ENCODE measurements at regions of chr2 and their contacts with region 1.

Region 1: DNA sequence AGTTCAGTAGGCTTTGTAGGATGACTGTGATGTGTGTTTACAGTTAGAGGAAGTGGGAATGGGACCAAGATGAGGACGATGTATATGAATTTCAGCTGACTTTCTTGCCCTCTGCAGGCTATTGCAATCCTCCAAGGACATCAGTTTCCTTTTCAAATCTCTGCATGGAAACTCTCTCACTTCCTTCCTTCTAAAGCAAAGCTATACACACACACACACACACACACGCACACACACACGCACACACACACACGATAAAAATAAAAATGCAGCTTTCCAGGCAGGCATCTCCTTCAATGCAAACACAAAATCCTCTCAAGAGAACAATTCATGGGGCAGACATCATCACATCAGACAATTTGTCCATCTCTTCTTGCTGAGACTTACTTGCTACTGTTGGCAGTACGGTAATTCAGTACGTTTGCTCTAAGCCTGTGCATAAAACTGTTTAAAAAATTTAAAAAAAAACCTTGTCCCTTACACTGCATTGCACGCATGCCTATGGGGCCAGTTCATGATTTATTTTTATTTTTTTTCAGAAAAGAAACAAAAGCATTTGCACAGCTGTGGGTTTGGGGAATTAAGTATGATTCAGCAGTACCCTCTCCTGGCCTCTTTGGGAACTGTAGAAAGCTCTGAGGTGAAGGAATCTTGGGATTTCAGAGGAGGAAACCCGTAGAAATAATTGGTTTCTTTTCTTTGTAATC is 27.1 kb upstream of the ICOS start:
- DNase-seq: no peak
- ATAC-seq: peak; percentile 89
- H3K4me3 ChIP-seq: no peak overlapping the region
- H3K27ac ChIP-seq: no peak overlapping the region
- H3K4me1 ChIP-seq: no peaks in the 10 kb centered on the region
- H3K27me3 ChIP-seq: 0 out of 2 replicates have a peak, but pooled peaks cover 3% of the 10 kb centered on the region
- CTCF ChIP-seq: peak; percentile 73; the same call in 1 of the 2 replicates

Region 2: DNA sequence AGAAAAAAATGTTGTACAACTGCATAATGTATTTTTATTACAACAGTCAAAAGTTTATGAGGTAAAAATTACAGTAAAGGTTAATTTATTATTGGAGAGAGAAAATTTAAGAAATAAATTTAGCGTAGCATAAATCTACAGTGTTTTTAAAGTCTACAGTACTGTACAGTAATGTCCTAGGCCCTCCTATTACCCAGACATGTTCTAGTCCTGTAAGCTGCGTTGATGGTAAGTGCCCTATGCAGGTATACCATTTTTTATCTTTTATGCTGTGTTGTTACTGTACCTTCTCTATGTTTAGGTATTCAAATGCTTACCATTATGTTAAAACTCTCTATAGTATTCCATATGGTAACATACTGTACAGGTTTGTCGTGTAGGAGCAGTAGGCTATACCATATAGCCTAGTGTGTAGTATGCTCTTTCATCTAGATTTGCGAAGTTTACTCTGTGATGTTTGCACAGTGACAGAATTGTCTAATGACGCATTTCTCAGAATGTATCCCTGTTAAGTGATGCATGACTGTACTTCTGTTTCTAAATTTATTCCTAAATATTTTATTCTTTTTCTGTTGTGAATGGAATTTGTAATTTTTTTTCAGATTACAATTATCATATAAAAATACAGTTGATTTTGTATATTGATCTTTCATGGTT is 556.7 kb before region 1 on chr2:
- CTCF ChIA-PET with region 1: no interaction called
- POLR2A ChIA-PET with region 1: no interaction called
- in situ Hi-C with region 1: no loop called
- intact Hi-C with region 1: no loop called
- DNase-seq: peak; percentile 52
- ATAC-seq: peak; percentile 96
- H3K4me3 ChIP-seq: no peak overlapping the region
- H3K27ac ChIP-seq: no peak overlapping the region
- H3K4me1 ChIP-seq: peaks cover 17% of the 10 kb centered on the region
- H3K27me3 ChIP-seq: no peaks in the 10 kb centered on the region
- CTCF ChIP-seq: no peak

Region 3: GRCh38 chr2:203453858-203454451 is 455.5 kb before region 1 on chr2:
- CTCF ChIA-PET with region 1: no interaction called
- POLR2A ChIA-PET with region 1: no interaction called
- in situ Hi-C with region 1: no loop called
- intact Hi-C with region 1: loop called (anchors 10 kb)
- DNase-seq: peak; percentile 42
- ATAC-seq: peak; percentile 81
- H3K4me3 ChIP-seq: no peak overlapping the region
- H3K27ac ChIP-seq: no peak overlapping the region
- H3K4me1 ChIP-seq: no peaks in the 10 kb centered on the region
- H3K27me3 ChIP-seq: no peaks in the 10 kb centered on the region
- CTCF ChIP-seq: peak; percentile 78; the same call in 1 of the 2 replicates

Region 4: GRCh38 chr2:203659331-203660049 is 249.9 kb before region 1 on chr2:
- CTCF ChIA-PET with region 1: no interaction called
- POLR2A ChIA-PET with region 1: no interaction called
- in situ Hi-C with region 1: no loop called
- intact Hi-C with region 1: loop called (anchors 10 kb)
- DNase-seq: no peak
- ATAC-seq: no peak
- H3K4me3 ChIP-seq: no peak overlapping the region
- H3K27ac ChIP-seq: no peak overlapping the region
- H3K4me1 ChIP-seq: no peaks in the 10 kb centered on the region
- H3K27me3 ChIP-seq: no peaks in the 10 kb centered on the region
- CTCF ChIP-seq: no peak

Measured in Panc1 (cell line).